Right lobe of liver (tissue), 6 donors: ENCODE measurements at regions of chr11 and their contacts with region 1.

Region 1: DNA sequence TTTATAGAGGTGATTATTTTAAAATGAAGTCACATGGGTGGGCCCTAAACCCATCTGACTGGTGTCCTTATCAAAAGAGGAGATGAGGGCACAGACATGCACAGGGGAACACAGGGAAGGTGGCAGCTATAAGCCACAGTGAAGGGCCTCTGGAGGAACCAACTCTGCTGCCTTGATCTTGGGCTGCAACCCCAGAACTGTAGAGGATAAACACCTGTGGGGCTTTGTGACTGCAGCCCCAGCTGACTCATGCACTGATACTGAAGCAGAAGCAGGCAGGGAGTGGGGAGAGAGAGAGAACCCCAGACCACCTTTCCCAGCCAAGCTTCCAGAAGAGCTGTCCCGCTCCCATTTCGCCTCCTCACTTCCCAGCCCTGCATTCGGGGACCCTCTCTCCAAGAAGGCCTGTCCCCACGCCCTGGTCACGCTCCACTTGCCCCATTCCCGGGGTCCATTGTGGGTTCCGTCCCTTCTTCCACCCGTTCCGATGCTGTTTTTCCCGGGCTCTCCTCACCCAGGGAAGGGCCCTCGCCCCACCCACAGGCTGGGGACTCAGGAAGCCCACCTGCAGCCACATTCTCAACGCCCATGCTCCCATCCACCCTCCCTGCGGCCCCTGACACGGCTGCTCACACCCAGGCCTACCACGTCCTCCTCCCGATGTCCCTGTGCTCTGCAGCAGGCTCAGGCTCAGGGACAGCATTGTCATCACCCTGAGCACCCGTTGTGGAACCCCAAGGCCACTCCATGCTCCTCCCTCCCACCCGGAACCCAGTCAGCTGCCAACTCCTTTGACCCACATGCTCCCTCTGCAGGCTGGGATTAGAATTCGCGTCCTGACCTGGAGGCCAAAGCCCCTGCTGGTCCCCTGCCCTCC is 90.8 kb upstream of the SHANK2 start:
- DNase-seq: peak; percentile 40 to 68 (median 63)
- ATAC-seq: peak; percentile 82 to 92 (median 89)
- H3K4me3 ChIP-seq: no peak overlapping the region
- H3K27ac ChIP-seq: no peak overlapping the region
- H3K4me1 ChIP-seq: peaks cover 0 to 5% (median 0%) of the 10 kb centered on the region in 4 donors
- H3K27me3 ChIP-seq: no peaks in the 10 kb centered on the region
- CTCF ChIP-seq: peak; percentile 47 to 66 (median 51)
- POLR2A ChIP-seq: no peak

Region 2: GRCh38 chr11:71114124-71114851 is 228.9 kb before region 1 on chr11:
- intact Hi-C with region 1: loop called in 1 of 2 experiments (anchors 10 kb)
- DNase-seq: no peak
- ATAC-seq: peak in 1 of 4 donors; percentile 69
- H3K4me3 ChIP-seq: no peak overlapping the region
- H3K27ac ChIP-seq: no peak overlapping the region
- H3K4me1 ChIP-seq: peaks cover 0 to 7% (median 0%) of the 10 kb centered on the region in 4 donors
- H3K27me3 ChIP-seq: no peaks in the 10 kb centered on the region
- CTCF ChIP-seq: no peak
- POLR2A ChIP-seq: no peak

Region 3: DNA sequence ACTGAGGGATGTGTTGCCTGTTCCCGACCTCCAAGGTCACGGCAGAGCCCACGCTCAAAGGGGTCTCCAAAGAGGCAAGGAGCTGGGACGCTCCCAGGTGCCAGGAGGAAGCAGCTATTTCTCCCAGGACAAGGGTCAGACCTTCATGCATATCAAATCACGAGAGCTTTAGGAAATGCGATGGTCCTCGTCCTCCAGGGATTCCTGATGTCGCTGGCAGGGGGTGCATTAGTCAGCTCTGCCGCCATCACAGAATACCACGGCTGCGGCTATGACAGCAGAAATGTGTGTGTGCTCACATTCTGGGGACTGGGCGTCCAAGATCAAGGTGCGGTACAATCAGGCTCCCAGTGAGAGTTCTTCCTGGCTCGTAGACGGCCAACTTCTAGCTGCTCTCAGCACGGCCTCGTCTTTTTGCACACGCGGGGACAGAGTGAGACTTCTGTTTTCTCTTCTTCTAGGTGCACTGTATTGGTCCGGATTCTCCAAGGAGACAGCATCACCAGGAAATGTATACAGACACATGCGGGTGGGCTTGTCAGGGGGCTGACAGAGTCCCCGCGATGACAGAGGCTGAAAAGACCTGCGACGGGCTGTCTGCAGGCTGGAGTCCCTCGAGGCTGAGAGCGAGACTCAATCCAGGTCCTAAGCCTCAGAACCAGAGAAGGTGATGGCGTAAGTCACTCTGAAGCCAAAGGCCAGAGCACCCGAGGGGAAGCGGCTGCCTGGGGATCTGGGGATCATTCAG is 172.3 kb before region 1 on chr11:
- intact Hi-C with region 1: no loop called
- DNase-seq: no peak
- ATAC-seq: no peak
- H3K4me3 ChIP-seq: no peak overlapping the region
- H3K27ac ChIP-seq: no peak overlapping the region
- H3K4me1 ChIP-seq: no peaks in the 10 kb centered on the region
- H3K27me3 ChIP-seq: no peaks in the 10 kb centered on the region
- CTCF ChIP-seq: no peak
- POLR2A ChIP-seq: no peak

Region 4: DNA sequence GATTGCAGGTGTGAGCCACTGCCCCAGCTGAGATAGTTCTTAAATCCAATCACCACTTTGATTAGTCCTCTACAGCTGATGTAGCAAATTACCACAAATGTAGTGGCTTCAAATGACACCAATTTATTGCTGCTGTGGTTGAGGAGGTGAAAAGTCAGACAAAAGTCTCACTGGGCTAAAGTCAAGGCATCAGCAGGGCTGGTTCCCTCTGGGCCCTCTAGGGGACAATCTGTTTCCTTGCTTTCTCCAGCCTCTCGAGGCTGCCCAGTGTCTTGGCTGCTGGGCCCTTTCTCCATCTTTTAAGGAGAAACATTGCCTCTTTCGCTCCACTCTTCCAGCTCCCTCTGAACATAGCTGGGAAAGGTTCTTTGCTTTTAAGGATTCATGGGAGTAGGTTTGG is 40.3 kb before region 1 on chr11:
- intact Hi-C with region 1: no loop called
- DNase-seq: no peak
- ATAC-seq: no peak
- H3K4me3 ChIP-seq: no peak overlapping the region
- H3K27ac ChIP-seq: no peak overlapping the region
- H3K4me1 ChIP-seq: peaks cover 0 to 17% (median 5%) of the 10 kb centered on the region in 4 donors
- H3K27me3 ChIP-seq: no peaks in the 10 kb centered on the region
- CTCF ChIP-seq: peak in 1 of 4 donors; percentile 8
- POLR2A ChIP-seq: no peak

Region 5: GRCh38 chr11:71454470-71455469 is 111.6 kb after region 1 on chr11:
- intact Hi-C with region 1: no loop called
- DNase-seq: peak in 2 of 3 donors; percentile 34 to 39
- ATAC-seq: no peak
- H3K4me3 ChIP-seq: peak overlapping the region in 1 of 3 donors; percentile 66
- H3K27ac ChIP-seq: peak overlapping the region in 1 of 3 donors; percentile 85
- H3K4me1 ChIP-seq: peaks cover 3 to 32% (median 15%) of the 10 kb centered on the region in 4 donors
- H3K27me3 ChIP-seq: no peaks in the 10 kb centered on the region
- CTCF ChIP-seq: peak; percentile 20 to 44 (median 33)
- POLR2A ChIP-seq: no peak